Activated CD4-positive, alpha-beta T cell treated with anti-CD3 and anti-CD28 coated beads, Interleukin-2, amount 10 ng/mL, durations not matched to agents 7 days and 5 days (primary cell): ENCODE measurements at regions of chr20 and their contacts with region 1.

Region 1: GRCh38 chr20:17967521-17968365 is 851 bp downstream of the SNX5 start:
- DNase-seq: no peak
- H3K4me3 Mint-ChIP-seq: peak overlapping the region; percentile 99
- H3K27ac Mint-ChIP-seq: peak overlapping the region; percentile 95
- H3K4me1 Mint-ChIP-seq: peaks cover 54% of the 10 kb centered on the region
- H3K27me3 Mint-ChIP-seq: no peaks in the 10 kb centered on the region

Region 2: GRCh38 chr20:17957505-17958363 is 10.0 kb before region 1 on chr20:
- CTCF ChIA-PET with region 1: interaction called, 31 read pairs
- POLR2A ChIA-PET with region 1: interaction called, 4 read pairs
- DNase-seq: no peak
- H3K4me3 Mint-ChIP-seq: no peak overlapping the region
- H3K27ac Mint-ChIP-seq: peak overlapping the region; percentile 69
- H3K4me1 Mint-ChIP-seq: peaks cover 90% of the 10 kb centered on the region
- H3K27me3 Mint-ChIP-seq: no peaks in the 10 kb centered on the region

Region 3: GRCh38 chr20:17995967-17996819 is 28.4 kb after region 1 on chr20:
- CTCF ChIA-PET with region 1: interaction called, 14 read pairs
- POLR2A ChIA-PET with region 1: interaction called, 5 read pairs
- DNase-seq: peak; percentile 63
- H3K4me3 Mint-ChIP-seq: no peak overlapping the region
- H3K27ac Mint-ChIP-seq: no peak overlapping the region
- H3K4me1 Mint-ChIP-seq: peaks cover 35% of the 10 kb centered on the region
- H3K27me3 Mint-ChIP-seq: peaks cover 2% of the 10 kb centered on the region